ENCODE measurements at regions of chr17 and their contacts with region 1.

Region 1: DNA sequence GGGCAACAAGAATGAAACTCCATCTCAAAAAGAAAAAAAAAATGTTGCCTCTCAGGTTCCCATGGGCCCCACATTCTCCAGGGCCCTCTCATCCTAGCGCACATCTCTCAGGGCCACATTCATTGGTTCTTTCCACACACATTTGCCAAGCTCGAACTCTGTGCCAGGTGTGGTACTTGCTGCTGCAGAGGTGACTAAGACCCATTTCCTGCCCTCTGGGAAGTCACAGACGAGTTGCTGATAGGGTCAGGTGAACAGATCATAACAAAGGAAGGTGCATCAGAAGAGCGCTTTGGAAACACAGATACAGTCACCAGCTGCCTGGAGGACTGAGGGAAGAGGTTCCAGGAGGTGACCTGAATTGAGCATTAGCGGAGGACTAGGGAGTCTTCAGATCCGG is 1.0 kb downstream of the GSDMA start:
- DNase-seq: peak in 4 of 9 donors; percentile 23 to 40 (median 28)
- ATAC-seq: no peak
- H3K4me3 ChIP-seq: no peak overlapping the region
- H3K4me3 Mint-ChIP-seq: peak overlapping the region in 9 of 10 donors; percentile 2 to 66 (median 39)
- H3K27ac ChIP-seq: no peak overlapping the region
- H3K27ac Mint-ChIP-seq: peak overlapping the region in 8 of 9 donors; percentile 40 to 96 (median 69)
- H3K4me1 ChIP-seq: peaks cover 13 to 28% of the 10 kb centered on the region in 2 donors
- H3K4me1 Mint-ChIP-seq: peaks cover 16 to 51% (median 35%) of the 10 kb centered on the region in 7 donors
- H3K27me3 ChIP-seq: no peaks in the 10 kb centered on the region
- H3K27me3 Mint-ChIP-seq: peaks cover 0 to 16% (median 0%) of the 10 kb centered on the region in 5 donors

Region 2: GRCh38 chr17:39872751-39873150 is 91.1 kb before region 1 on chr17:
- CTCF ChIA-PET with region 1: interaction called, 5 read pairs
- POLR2A ChIA-PET with region 1: interaction called, 4 read pairs
- intact Hi-C with region 1: loop called in 1 of 2 experiments (anchors 1 kb)
- DNase-seq: peak in 1 of 9 donors; percentile 25
- ATAC-seq: peak; percentile 57
- H3K4me3 ChIP-seq: no peak overlapping the region
- H3K4me3 Mint-ChIP-seq: no peak overlapping the region
- H3K27ac ChIP-seq: no peak overlapping the region
- H3K27ac Mint-ChIP-seq: no peak overlapping the region
- H3K4me1 ChIP-seq: no peaks in the 10 kb centered on the region
- H3K4me1 Mint-ChIP-seq: peaks cover 2 to 13% (median 11%) of the 10 kb centered on the region in 7 donors
- H3K27me3 ChIP-seq: no peaks in the 10 kb centered on the region
- H3K27me3 Mint-ChIP-seq: peaks cover 0 to 22% (median 0%) of the 10 kb centered on the region in 5 donors